Heart right ventricle (tissue), 16 donors: ENCODE measurements at regions of chr11 and their contacts with region 1.

Region 1: DNA sequence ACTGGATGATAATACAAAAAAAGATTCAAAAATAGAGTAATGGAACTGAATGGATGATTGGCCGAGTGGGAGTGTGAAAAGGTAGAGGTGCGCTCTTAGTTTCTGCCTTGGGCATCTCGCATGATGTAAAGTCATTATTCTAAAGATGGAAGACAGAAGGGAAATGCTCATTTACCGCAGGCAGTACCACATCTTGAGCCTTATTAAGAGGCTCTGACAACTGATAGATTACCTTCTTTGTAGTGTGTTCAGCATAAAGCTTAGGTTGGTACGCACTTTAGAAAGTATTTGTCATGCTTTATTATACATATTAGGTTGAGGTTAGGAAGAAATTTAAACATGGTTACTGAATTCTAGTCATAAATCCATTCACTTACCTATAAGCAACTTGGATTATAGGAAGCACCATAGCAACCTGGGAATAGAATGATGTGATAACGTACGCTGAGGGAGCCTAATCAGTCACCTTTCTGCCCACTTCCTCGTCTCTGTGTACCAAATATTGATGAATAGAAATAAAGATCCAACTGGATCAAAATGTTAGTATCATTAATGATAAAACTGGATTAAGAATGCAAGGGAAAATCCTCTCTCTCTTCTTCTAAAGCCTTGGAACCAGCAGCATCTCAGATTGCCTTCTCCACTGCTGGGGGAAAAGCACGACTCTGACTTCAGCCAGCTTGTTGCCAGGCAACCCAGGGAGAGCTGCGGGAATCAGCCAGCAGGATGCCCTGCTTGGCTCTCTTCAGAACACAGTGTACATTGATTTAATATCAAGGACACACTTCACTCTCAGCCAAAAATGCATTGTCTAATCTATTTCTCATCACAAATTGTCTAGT is 29.0 kb upstream of the VWA5A start:
- DNase-seq: no peak
- ATAC-seq: no peak
- H3K4me3 ChIP-seq: no peak overlapping the region
- H3K27ac ChIP-seq: no peak overlapping the region
- H3K4me1 ChIP-seq: no peaks in the 10 kb centered on the region
- H3K27me3 ChIP-seq: peaks cover 0 to 48% (median 6%) of the 10 kb centered on the region in 7 donors
- CTCF ChIP-seq: no peak

Region 2: DNA sequence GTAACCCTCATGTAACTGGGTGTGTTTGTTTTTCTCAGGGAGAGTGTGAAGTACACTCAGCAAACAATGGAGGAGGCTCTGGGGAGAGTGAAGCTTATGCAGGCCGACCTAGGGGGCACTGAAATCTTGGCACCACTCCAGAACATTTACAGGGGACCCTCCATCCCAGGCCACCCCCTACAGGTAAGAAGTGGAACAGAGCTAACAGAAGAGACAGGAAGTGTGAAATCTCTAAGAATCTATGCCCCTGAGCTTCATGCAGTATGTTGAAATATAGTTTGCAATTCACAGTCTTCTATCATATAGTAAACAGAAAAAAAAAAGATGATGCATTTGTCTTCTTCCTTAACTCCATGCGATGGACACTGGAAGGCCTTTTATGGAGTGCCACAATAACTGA is 37.4 kb after region 1 on chr11:
- intact Hi-C with region 1: loop called in 1 of 10 experiments (anchors 1 kb)
- DNase-seq: no peak
- ATAC-seq: no peak
- H3K4me3 ChIP-seq: no peak overlapping the region
- H3K27ac ChIP-seq: no peak overlapping the region
- H3K4me1 ChIP-seq: no peaks in the 10 kb centered on the region
- H3K27me3 ChIP-seq: no peaks in the 10 kb centered on the region
- CTCF ChIP-seq: no peak